A549 (cell line): ENCODE measurements at regions of chr5 and their contacts with region 1.

Region 1: DNA sequence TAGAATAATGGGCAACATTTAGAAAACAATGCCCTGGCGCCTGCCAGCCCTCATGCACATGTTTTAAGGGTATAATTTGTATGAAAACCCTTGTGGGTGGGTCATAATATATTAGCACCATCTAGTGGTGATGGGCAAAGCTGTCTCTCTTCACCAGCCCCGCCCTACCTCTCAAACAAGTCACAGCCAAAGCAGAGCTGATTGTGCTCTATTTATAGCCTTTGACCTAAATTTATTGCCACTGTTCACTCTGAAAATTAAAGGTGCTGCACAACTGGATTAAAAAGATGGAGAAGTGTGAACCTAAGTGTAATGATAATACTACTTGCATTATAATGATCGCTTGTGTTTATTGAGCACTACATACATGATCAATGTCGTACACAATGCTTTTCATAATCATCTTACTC is 131.9 kb upstream of the ANKH start:
- DNase-seq: peak; percentile 71 to 79
- ATAC-seq: peak; percentile 92 to 93
- H3K4me3 ChIP-seq: no peak overlapping the region
- H3K27ac ChIP-seq: 0 out of 6 replicates have a peak overlapping the region, but pooled peaks of 1 of the 2 experiments have one; percentile 14
- H3K4me1 ChIP-seq: peaks cover 15% of the 10 kb centered on the region
- CTCF ChIP-seq: peak; percentile 89
- EP300 ChIP-seq: no peak
- POLR2A ChIP-seq: no peak
- RAD21 ChIP-seq: peak; percentile 93 to 94

Region 2: GRCh38 chr5:14871210-14872069 is 132.1 kb before region 1 on chr5 and contains the start of gene ANKH:
- CTCF ChIA-PET with region 1: interaction called, 22 read pairs
- POLR2A ChIA-PET with region 1: no interaction called
- DNase-seq: peak; percentile 45 to 69
- ATAC-seq: peak; percentile 90 to 92
- H3K4me3 ChIP-seq: peak within 1 kb of the TSS; percentile 76
- H3K27ac ChIP-seq: peak within 1 kb of the TSS; percentile 92 to 98
- H3K4me1 ChIP-seq: peaks cover 16% of the 10 kb centered on the region; the same call in 2 of the 3 replicates
- CTCF ChIP-seq: peak; percentile 81
- EP300 ChIP-seq: no peak
- POLR2A ChIP-seq: peak; percentile 50; the same call in 1 of the 2 replicates
- RAD21 ChIP-seq: no peak
- polyA plus RNA-seq, gene ANKH: 17.3 and 18.7 TPM in 2 replicates

Region 3: DNA sequence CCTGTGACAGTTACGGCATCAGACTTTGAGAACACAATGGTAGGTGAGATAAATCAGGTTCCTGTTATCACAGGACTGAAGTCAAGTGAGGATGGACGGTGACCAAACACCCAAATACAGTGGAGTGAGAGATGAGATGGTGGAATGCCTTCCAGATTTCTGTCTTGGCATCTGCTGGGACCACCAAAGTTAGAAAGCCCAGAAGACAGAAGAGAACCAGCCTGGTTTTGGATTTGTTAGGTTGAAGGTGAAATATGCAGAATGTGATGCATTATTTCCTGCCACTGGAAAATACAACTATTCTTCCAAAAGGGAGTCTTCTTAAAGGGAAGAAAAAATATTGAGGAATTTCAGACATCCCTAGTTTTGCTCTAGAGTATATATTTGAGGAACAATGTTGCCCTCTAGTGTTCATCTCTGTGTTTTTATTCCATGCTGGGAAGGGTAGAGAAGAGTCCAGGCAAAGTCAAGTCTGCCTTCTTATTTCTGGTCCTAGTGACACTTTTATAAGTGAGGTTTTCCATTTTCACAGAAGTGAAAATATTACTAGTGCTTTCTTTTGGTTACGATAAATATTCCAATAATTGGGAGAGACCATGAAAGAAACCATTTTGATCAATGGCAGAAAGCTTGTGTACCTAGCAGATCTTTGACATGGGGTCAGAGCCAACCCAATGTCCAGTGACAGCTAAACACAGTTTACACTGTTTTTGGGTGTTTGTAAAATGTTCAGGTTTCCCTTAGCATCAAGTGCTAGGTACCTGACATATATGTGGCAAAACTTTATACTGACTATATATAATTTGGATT is 10.3 kb after region 1 on chr5:
- CTCF ChIA-PET with region 1: interaction called, 14 read pairs
- POLR2A ChIA-PET with region 1: no interaction called
- DNase-seq: peak; percentile 42 to 76
- ATAC-seq: peak; percentile 85 to 89
- H3K4me3 ChIP-seq: no peak overlapping the region
- H3K27ac ChIP-seq: peak overlapping the region; percentile 39 to 73; a peak in 5 of 6 replicates
- H3K4me1 ChIP-seq: peaks cover 46% of the 10 kb centered on the region
- CTCF ChIP-seq: peak; percentile 82
- EP300 ChIP-seq: no peak
- POLR2A ChIP-seq: no peak
- RAD21 ChIP-seq: peak; percentile 89

Region 4: GRCh38 chr5:15574806-15575325 is 571.4 kb after region 1 on chr5:
- CTCF ChIA-PET with region 1: no interaction called
- POLR2A ChIA-PET with region 1: no interaction called
- DNase-seq: no peak
- ATAC-seq: no peak
- H3K4me3 ChIP-seq: no peak overlapping the region
- H3K27ac ChIP-seq: no peak overlapping the region
- H3K4me1 ChIP-seq: no peaks in the 10 kb centered on the region
- CTCF ChIP-seq: no peak
- EP300 ChIP-seq: no peak
- POLR2A ChIP-seq: no peak
- RAD21 ChIP-seq: no peak